Activated naive CD4-positive, alpha-beta T cell treated with anti-CD3 and anti-CD28 coated beads for 36 hours (primary cell): ENCODE measurements at regions of chr7 and their contacts with region 1.

Region 1: DNA sequence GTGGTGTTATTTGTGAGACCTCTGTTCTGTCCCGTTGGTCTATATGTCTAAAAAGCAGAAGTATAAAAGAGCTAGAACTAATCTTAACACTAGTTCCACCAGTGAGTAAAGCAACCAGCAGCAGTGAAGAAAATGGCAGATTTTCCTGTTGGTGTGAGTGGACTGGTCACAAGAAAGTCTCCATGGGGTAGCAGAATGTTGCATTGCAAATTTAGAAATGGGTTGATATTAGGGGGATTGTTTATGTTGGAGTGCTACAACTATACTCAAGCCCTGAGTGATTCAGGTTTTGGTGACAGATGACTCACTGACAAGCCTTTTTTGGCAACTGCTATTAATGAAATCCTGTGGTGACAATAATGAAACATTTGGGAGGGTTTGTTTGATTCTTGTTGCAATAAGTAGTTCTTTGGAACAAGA is 5.6 kb downstream of the AVL9 start:
- DNase-seq: no peak
- H3K4me3 Mint-ChIP-seq: no peak overlapping the region
- H3K27ac Mint-ChIP-seq: peak overlapping the region; percentile 17
- H3K4me1 Mint-ChIP-seq: peaks cover 57% of the 10 kb centered on the region
- H3K27me3 Mint-ChIP-seq: no peaks in the 10 kb centered on the region

Region 2: DNA sequence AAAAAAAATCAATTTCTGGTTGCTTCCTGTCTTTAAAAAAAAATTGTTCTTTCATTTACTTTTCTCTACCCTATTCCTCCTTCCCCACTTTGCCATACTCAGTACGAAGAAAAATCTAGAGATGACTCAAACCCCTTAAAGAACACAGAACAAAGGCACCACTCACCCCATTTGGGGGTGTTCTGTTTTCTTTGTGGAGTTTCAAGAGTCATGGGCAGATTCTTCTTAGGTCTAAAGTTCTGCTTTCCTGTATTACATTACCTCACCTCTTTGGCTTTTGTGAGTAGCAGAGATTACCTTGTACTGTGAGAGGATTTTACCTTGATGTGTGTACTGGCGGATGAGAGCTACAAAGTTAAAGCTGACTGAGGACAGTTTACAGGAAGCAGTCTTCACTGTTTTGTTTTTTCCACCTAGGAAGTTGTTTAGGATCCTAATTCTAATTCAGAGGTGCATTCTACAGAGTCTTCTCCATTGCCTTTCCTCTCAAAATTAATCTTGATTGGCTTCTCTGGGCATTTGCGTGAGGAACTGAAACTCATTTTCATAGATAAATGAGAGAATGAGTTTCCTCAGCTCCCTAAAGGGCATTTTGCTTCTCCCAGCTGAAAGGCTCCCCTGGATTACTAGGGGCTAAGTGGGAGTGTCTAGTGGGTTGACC is 15.1 kb after region 1 on chr7:
- CTCF ChIA-PET with region 1: interaction called, 3 read pairs
- intact Hi-C with region 1: loop called (anchors 1 kb)
- DNase-seq: peak; percentile 44
- H3K4me3 Mint-ChIP-seq: no peak overlapping the region
- H3K27ac Mint-ChIP-seq: peak overlapping the region; percentile 52
- H3K4me1 Mint-ChIP-seq: peaks cover 74% of the 10 kb centered on the region
- H3K27me3 Mint-ChIP-seq: no peaks in the 10 kb centered on the region

Region 3: DNA sequence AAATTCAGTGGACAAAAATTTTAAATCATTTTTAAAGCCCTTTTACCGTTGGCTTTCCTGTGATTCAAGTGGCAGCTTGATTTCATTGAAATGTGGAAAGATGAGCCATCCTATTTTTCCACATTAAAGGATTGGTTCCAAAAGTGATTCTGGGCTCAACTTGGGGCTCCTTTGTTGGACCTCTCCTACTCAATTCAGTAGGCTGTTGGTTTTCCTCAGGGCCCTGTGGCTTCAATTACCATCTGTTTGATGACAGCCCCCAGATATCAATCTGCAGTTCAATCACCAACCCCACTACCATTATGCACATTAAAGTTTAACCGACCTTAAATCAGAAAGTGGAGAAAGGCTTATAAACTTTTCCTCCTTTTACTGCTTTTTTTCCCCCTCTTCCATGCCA is 41.7 kb after region 1 on chr7:
- CTCF ChIA-PET with region 1: no interaction called
- intact Hi-C with region 1: no loop called
- DNase-seq: no peak
- H3K4me3 Mint-ChIP-seq: no peak overlapping the region
- H3K27ac Mint-ChIP-seq: no peak overlapping the region
- H3K4me1 Mint-ChIP-seq: peaks cover 14% of the 10 kb centered on the region
- H3K27me3 Mint-ChIP-seq: no peaks in the 10 kb centered on the region

Region 4: DNA sequence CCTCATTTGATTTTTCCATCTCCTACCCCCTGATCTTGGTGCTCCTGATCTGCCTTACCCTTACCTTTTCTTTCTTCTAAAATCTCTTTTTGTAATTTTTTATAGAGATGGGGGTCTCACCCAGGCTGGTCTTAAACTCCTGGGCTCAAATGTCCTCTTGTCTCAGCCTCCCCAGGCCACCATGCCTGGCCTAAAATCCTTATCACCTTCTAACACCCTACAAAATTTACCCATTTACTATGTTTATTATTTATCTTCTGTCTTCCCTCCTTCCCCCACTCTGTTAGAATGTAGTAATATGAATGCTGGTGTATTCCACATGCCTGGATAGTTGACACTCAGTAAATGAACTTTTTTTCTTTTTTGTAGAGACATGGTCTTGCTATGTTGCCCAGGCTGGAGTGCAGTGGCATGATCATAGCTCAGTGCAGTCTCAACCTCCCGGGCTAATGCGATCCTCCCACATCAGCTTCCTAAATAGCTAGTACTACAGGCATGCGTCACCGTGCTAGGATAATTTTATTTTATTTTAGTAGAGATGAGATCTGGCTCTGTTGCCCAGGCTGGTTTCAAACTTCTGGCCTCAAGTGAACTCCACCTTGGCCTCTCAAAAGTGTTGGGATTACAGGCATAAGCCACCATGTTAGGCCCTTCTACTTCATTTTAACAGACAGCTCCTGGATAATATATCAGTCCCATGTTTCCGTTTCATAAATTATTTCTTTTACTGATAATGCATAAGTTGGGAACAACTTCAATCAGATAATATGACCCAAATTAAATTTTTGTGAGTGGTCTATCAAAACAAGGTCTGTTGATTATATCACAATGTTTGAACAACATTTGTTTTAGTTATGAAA is 130.9 kb after region 1 on chr7:
- CTCF ChIA-PET with region 1: no interaction called
- intact Hi-C with region 1: no loop called
- DNase-seq: no peak
- H3K4me3 Mint-ChIP-seq: no peak overlapping the region
- H3K27ac Mint-ChIP-seq: no peak overlapping the region
- H3K4me1 Mint-ChIP-seq: no peaks in the 10 kb centered on the region
- H3K27me3 Mint-ChIP-seq: no peaks in the 10 kb centered on the region